Activated CD4-positive, alpha-beta T cell treated with anti-CD3 and anti-CD28 coated beads for 36 hours (primary cell): ENCODE measurements at regions of chr19 and their contacts with region 1.

Region 1: GRCh38 chr19:56252699-56253422 is 19.7 kb upstream of the EDDM13 start:
- DNase-seq: peak; percentile 90
- ATAC-seq: peak; percentile 85
- H3K4me3 Mint-ChIP-seq: no peak overlapping the region
- H3K27ac Mint-ChIP-seq: no peak overlapping the region
- H3K4me1 Mint-ChIP-seq: peaks cover 3% of the 10 kb centered on the region
- H3K27me3 Mint-ChIP-seq: no peaks in the 10 kb centered on the region

Region 2: DNA sequence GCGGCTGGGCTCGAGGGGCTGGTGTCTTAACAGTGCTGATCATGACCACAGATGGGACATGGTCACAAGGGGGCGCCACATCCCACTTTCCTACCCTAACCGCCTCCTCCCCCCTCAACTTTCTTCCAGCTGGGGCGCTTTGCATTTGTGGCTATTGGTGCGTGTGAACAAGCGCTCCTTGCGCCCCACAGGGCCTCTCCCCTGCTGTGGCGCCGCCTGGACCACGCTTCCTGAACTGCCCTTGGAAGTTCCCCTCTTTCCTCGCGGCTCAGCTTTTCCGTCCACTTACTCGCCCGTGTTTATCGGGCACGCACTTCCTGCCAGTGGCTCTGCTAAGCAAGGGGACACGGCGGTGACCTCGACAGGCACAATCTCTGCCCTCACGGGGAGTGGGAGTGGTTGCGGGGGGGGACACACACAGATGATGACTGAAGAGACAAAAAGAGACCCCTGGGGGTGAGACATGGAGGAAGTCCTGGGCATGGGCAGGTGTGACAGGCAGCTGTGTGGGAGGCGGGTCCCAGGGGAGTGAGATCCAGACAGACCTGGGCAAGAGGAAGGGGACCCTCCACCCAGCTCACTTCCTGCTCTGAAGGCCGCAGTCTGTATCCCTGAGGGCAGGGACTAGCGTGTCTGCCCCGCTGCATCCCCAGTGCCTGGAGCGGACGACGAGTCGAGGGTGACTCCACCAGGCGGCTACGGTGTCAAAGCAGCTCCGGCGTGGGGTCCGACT is 172.0 kb before region 1 on chr19:
- CTCF ChIA-PET with region 1: interaction called, 21 read pairs
- POLR2A ChIA-PET with region 1: no interaction called
- intact Hi-C with region 1: no loop called
- DNase-seq: peak; percentile 88
- ATAC-seq: peak; percentile 61
- H3K4me3 Mint-ChIP-seq: peak overlapping the region; percentile 59
- H3K27ac Mint-ChIP-seq: no peak overlapping the region
- H3K4me1 Mint-ChIP-seq: peaks cover 10% of the 10 kb centered on the region
- H3K27me3 Mint-ChIP-seq: peaks cover 11% of the 10 kb centered on the region

Region 3: GRCh38 chr19:56170261-56170660 is 82.6 kb before region 1 on chr19:
- CTCF ChIA-PET with region 1: no interaction called
- POLR2A ChIA-PET with region 1: no interaction called
- intact Hi-C with region 1: loop called in 1 of 2 experiments (anchors 1 kb)
- DNase-seq: no peak
- ATAC-seq: no peak
- H3K4me3 Mint-ChIP-seq: no peak overlapping the region
- H3K27ac Mint-ChIP-seq: no peak overlapping the region
- H3K4me1 Mint-ChIP-seq: peaks cover 3% of the 10 kb centered on the region
- H3K27me3 Mint-ChIP-seq: no peaks in the 10 kb centered on the region

Region 4: DNA sequence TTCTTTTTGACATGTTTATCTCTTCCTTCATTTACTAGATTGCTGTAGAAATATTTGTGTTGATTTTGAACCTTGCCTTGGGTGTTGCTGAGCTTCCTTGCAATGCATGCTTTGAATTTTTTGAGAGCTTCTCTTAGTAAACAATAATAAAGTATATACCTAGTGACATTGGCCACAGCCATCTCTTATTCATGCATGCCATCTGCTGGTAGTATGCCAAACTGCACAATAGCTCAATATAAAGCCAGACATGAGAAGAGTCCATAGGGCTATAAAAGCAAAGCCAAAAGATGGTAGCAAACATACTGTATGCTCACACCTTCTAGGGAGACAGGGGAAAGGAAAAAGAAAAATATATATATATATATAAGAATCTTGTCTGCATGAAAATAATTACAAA is 80.6 kb after region 1 on chr19:
- CTCF ChIA-PET with region 1: interaction called, 72 read pairs
- POLR2A ChIA-PET with region 1: interaction called, 3 read pairs
- intact Hi-C with region 1: loop called (anchors 1 kb)
- DNase-seq: peak; percentile 55
- ATAC-seq: no peak
- H3K4me3 Mint-ChIP-seq: no peak overlapping the region
- H3K27ac Mint-ChIP-seq: no peak overlapping the region
- H3K4me1 Mint-ChIP-seq: no peaks in the 10 kb centered on the region
- H3K27me3 Mint-ChIP-seq: no peaks in the 10 kb centered on the region

Region 5: DNA sequence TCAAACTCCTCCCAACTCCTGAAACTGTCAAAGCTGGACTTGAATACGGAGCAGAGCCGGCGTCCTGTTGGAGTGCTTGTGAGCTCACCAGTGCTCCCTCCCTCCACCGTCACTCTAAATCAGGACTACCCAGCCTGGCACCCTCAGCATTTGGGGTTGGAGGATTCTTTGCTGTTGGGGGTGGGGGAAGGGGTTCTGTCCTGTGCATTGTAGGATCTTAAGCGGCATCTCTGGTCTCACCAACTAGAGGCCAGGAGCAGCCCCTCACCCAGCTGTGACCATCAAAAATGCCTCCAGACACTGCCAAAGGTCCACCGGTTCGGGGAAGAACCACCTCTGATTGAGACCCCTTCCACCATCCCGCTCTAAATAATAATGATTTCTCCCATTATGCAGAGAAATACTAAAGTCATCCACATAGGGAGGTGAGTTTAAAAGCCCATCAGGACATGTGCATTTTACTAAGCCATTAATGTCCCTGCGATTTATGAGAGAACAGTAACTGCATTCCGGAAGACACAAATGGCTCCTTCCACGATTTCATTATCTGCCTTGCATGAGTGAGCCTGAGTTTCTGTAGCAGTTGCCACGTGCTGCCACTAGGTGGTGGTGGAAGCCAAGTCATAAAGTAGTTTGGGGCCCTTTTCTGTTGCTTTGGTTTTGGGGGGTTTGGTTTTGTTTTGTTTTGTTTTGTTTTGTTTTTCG is 850.9 kb after region 1 on chr19:
- CTCF ChIA-PET with region 1: interaction called, 3 read pairs
- POLR2A ChIA-PET with region 1: no interaction called
- intact Hi-C with region 1: loop called in 1 of 2 experiments (anchors 2 kb)
- DNase-seq: peak; percentile 74
- ATAC-seq: peak; percentile 83
- H3K4me3 Mint-ChIP-seq: peak overlapping the region; percentile 26
- H3K27ac Mint-ChIP-seq: no peak overlapping the region
- H3K4me1 Mint-ChIP-seq: peaks cover 8% of the 10 kb centered on the region
- H3K27me3 Mint-ChIP-seq: peaks cover 5% of the 10 kb centered on the region